KBM-7 (cell line): ENCODE measurements at regions of chr3 and their contacts with region 1.

Region 1: DNA sequence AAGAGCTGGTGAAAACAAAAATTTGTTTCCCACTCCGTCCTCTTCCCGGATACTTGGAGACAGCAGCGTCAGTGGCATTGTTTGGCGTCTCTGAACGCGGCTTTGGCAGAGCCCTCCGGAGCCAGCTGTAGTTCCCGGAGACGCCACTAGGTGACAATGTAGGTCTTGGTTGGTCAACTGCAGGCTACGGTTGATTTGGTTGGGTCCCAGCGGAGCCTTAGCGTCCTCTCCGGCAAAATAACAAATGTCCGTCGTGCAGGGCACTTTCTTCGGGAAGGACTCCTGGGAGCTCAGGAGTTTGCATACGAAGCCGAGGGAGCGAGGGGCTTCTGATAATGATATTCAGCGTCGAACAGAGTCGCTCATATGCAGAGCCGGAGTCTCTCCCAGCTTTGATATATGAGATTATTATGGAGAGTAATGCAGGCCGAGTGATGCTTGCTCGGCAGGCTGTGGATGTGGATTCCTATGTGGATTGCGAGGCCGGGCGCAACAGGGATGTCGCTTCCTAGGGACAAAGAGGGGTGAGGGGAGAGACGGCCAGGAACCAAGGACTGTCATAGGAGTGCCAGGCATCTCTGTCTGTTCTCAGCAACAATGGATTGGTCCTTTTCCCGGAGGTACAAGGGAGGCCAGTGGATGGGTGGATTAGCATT is 74.8 kb downstream of the IL20RB start:
- DNase-seq: peak; percentile 83

Region 2: GRCh38 chr3:136070953-136071949 is 961.3 kb before region 1 on chr3:
- in situ Hi-C with region 1: loop called (anchors 25 kb)
- DNase-seq: peak; percentile 30

Region 3: GRCh38 chr3:136577792-136578191 is 454.8 kb before region 1 on chr3:
- in situ Hi-C with region 1: no loop called
- DNase-seq: no peak

Region 4: DNA sequence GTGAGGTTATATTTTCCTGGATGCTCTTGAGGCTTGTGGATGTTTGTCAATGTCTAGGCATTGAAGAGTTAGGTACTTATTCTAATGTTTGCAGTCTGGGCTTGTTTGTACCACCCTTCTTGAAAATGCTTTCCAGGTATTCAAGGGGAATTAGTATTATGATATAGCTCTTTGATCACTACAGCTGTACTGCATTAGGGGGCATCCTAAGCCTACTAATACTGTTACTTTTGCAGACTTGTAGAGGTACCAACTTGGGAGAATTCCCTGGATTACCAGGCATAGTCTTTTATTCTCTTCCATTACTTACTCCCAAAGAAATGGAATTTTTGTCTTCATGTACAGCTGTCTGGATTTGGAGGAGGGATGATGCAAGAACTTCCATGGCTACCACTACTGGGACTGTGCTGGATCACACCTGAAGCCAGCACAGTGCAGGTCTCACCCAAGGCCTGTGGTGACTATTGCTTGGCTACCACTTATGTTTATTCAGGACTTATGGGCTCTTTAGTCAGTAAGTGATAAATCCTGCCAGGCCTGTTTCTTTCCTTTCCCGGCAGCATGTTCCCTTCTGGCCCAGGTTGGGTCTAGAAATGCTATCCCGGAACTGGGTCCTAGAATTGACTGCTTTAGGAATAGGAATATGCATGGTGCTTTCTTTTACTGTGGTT is 328.1 kb after region 1 on chr3:
- in situ Hi-C with region 1: no loop called
- DNase-seq: no peak